ENCODE measurements at regions of chr4 and their contacts with region 1.

Region 1: GRCh38 chr4:81494031-81494431 is 22.3 kb upstream of the RASGEF1B start:
- DNase-seq: peak in 2 of 9 experiments; percentile 46 to 71
- ATAC-seq: peak; percentile 16
- H3K4me3 ChIP-seq: peak overlapping the region; percentile 12 to 32
- H3K4me3 Mint-ChIP-seq: peak overlapping the region; percentile 78
- H3K27ac ChIP-seq: peak overlapping the region; percentile 7 to 71
- H3K27ac Mint-ChIP-seq: peak overlapping the region; percentile 93
- H3K4me1 ChIP-seq: peaks cover 40% of the 10 kb centered on the region
- H3K4me1 Mint-ChIP-seq: peaks cover 50% of the 10 kb centered on the region
- H3K27me3 ChIP-seq: no peaks in the 10 kb centered on the region
- H3K27me3 Mint-ChIP-seq: no peaks in the 10 kb centered on the region
- CTCF ChIP-seq: no peak

Region 2: DNA sequence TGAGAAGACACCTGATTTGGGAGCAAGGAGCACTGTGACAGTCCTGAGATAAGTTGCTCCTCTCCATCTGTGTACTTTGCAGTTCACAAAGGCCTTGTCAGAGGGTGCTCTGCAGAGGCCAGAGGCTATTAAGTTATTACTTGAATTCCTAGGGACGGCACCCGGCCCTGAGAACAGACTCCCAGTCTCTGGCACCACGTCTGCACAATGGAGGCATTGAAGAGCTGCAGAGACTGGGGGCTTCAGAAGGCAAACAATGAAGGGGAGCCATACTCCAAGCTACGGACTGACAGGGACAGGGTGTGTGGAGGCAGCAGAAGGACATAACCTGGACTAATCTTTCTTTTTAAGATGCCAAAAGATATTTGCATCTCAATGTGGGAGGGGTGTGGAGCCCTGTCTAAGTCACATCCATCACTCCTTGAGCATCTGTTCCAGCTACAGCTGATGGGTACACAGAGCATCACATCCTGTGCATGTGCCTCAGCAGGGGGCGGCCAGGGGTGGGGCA is 33.8 kb before region 1 on chr4:
- CTCF ChIA-PET with region 1: no interaction called
- POLR2A ChIA-PET with region 1: no interaction called
- intact Hi-C with region 1: no loop called
- DNase-seq: no peak
- ATAC-seq: peak; percentile 31
- H3K4me3 ChIP-seq: no peak overlapping the region
- H3K4me3 Mint-ChIP-seq: no peak overlapping the region
- H3K27ac ChIP-seq: no peak overlapping the region
- H3K27ac Mint-ChIP-seq: no peak overlapping the region
- H3K4me1 ChIP-seq: peaks cover 5% of the 10 kb centered on the region
- H3K4me1 Mint-ChIP-seq: peaks cover 45% of the 10 kb centered on the region
- H3K27me3 ChIP-seq: no peaks in the 10 kb centered on the region
- H3K27me3 Mint-ChIP-seq: no peaks in the 10 kb centered on the region
- CTCF ChIP-seq: no peak

Region 3: DNA sequence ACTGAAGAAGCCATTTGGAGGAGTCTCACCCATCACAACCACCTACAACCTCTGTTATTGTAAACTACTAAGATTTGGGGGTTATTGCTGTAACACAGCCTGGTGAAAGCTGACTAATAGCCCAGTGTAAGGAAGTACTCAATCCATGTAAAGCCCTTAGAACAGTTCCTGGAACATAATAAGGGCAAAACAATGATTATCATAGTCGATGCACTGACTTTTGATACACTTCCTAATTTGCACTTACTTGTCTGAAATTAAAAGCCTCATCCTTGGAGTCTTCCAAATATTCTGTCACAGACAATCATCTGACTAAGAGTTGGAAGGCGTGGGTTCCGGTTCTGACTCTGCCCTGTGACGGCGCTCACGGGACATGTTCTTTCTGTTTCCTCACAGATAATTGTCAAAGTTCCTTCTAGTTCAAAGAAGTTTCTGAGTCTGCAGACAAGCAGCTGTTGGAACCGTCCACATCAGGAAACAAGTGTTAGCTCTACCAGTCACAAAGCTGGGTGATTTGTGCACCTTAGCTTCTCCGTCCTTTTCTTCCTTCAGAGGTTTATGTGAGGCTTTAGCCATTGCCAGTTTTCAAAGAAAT is 11.1 kb after region 1 on chr4:
- CTCF ChIA-PET with region 1: no interaction called
- POLR2A ChIA-PET with region 1: interaction called, 4 read pairs
- intact Hi-C with region 1: loop called in 1 of 2 experiments (anchors 1 kb)
- DNase-seq: peak; percentile 34 to 82 (median 67)
- ATAC-seq: peak; percentile 83
- H3K4me3 ChIP-seq: no peak overlapping the region
- H3K4me3 Mint-ChIP-seq: peak overlapping the region; percentile 72
- H3K27ac ChIP-seq: peak overlapping the region; percentile 3 to 69
- H3K27ac Mint-ChIP-seq: peak overlapping the region; percentile 89
- H3K4me1 ChIP-seq: peaks cover 17% of the 10 kb centered on the region
- H3K4me1 Mint-ChIP-seq: peaks cover 47% of the 10 kb centered on the region
- H3K27me3 ChIP-seq: no peaks in the 10 kb centered on the region
- H3K27me3 Mint-ChIP-seq: no peaks in the 10 kb centered on the region
- CTCF ChIP-seq: no peak

Measured in CD8-positive, alpha-beta T cell (primary cell).